ENCODE measurements at regions of chr3 and their contacts with region 1.

Region 1: GRCh38 chr3:12135029-12135657 is 23.6 kb downstream of the TIMP4 start:
- DNase-seq: no peak
- ATAC-seq: peak; percentile 95
- H3K4me3 ChIP-seq: no peak overlapping the region
- H3K27ac ChIP-seq: no peak overlapping the region
- H3K4me1 ChIP-seq: no peaks in the 10 kb centered on the region
- H3K27me3 ChIP-seq: no peaks in the 10 kb centered on the region
- CTCF ChIP-seq: peak; percentile 85 to 96 (median 96)
- EP300 ChIP-seq: no peak
- POLR2A ChIP-seq: no peak
- RAD21 ChIP-seq: peak; percentile 89

Region 2: GRCh38 chr3:12034440-12034839 is 100.7 kb before region 1 on chr3:
- CTCF ChIA-PET with region 1: no interaction called
- POLR2A ChIA-PET with region 1: no interaction called
- RAD21 ChIA-PET with region 1: no interaction called
- SMC1A ChIA-PET with region 1: no interaction called
- in situ Hi-C with region 1: no loop called
- intact Hi-C with region 1: no loop called
- DNase-seq: no peak
- ATAC-seq: no peak
- H3K4me3 ChIP-seq: no peak overlapping the region
- H3K27ac ChIP-seq: no peak overlapping the region
- H3K4me1 ChIP-seq: no peaks in the 10 kb centered on the region
- H3K27me3 ChIP-seq: no peaks in the 10 kb centered on the region
- CTCF ChIP-seq: no peak
- EP300 ChIP-seq: no peak
- POLR2A ChIP-seq: no peak
- RAD21 ChIP-seq: no peak

Region 3: GRCh38 chr3:12158387-12159226 is 23.5 kb after region 1 on chr3 and contains the start of gene TIMP4:
- CTCF ChIA-PET with region 1: interaction called, 24 read pairs
- POLR2A ChIA-PET with region 1: no interaction called
- RAD21 ChIA-PET with region 1: no interaction called
- SMC1A ChIA-PET with region 1: interaction called, 6 read pairs
- in situ Hi-C with region 1: no loop called
- intact Hi-C with region 1: no loop called
- DNase-seq: no peak
- ATAC-seq: no peak
- H3K4me3 ChIP-seq: no peak within 1 kb of the TSS
- H3K27ac ChIP-seq: no peak within 1 kb of the TSS
- H3K4me1 ChIP-seq: no peaks in the 10 kb centered on the region
- H3K27me3 ChIP-seq: peaks cover 0 to 1% of the 10 kb centered on the region in 2 experiments; a peak in 2 of 4 replicates
- CTCF ChIP-seq: no peak
- EP300 ChIP-seq: no peak
- POLR2A ChIP-seq: no peak
- RAD21 ChIP-seq: no peak
- polyA plus RNA-seq, gene TIMP4: not detected

Region 4: GRCh38 chr3:12175844-12176453 is 40.8 kb after region 1 on chr3:
- CTCF ChIA-PET with region 1: interaction called, 243 read pairs
- POLR2A ChIA-PET with region 1: interaction called, 3 read pairs
- RAD21 ChIA-PET with region 1: interaction called, 93 read pairs
- SMC1A ChIA-PET with region 1: interaction called, 96 read pairs
- in situ Hi-C with region 1: loop called (anchors 5 kb)
- intact Hi-C with region 1: loop called (anchors 1 kb)
- DNase-seq: no peak
- ATAC-seq: peak; percentile 100
- H3K4me3 ChIP-seq: no peak overlapping the region
- H3K27ac ChIP-seq: no peak overlapping the region
- H3K4me1 ChIP-seq: no peaks in the 10 kb centered on the region; the same call in 1 of the 2 replicates
- H3K27me3 ChIP-seq: no peaks in the 10 kb centered on the region
- CTCF ChIP-seq: peak; percentile 72 to 83 (median 82)
- EP300 ChIP-seq: no peak
- POLR2A ChIP-seq: no peak
- RAD21 ChIP-seq: peak; percentile 72

Region 5: DNA sequence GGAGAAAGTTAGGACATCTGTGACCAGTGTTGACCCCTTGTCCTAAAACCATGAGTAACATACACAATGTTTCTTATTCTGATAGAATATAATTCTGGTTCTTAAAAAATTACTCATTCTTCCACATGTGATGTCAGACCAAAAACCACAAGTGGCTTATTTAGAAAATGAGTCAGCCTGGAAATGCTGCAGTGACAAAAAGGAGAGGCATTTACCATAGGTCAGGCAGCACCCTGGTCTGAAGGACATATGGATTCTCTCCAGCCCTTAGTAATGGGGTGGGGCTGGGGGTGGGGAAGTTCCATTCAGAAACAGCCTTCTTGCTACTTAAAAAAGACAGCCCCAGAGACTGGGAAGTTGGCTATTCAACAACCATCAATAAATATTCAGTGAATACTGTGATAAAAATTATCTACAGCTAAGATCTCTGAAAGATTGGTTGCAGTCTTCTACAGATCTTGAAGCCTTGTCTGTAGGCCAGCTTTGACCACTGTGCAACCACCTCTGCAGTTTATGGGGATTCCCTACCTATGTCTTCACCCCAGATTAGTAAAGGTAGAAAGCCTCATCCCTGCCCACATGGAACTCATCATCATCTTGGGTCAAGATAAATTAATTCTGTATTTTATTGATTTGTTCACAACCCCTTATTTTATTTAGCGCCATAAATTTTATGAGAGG is 58.5 kb after region 1 on chr3:
- CTCF ChIA-PET with region 1: interaction called, 86 read pairs
- POLR2A ChIA-PET with region 1: no interaction called
- RAD21 ChIA-PET with region 1: interaction called, 16 read pairs
- SMC1A ChIA-PET with region 1: interaction called, 76 read pairs
- in situ Hi-C with region 1: no loop called
- intact Hi-C with region 1: loop called (anchors 2 kb)
- DNase-seq: peak; percentile 75
- ATAC-seq: peak; percentile 83
- H3K4me3 ChIP-seq: no peak overlapping the region
- H3K27ac ChIP-seq: peak overlapping the region; percentile 79
- H3K4me1 ChIP-seq: peaks cover 48% of the 10 kb centered on the region
- H3K27me3 ChIP-seq: no peaks in the 10 kb centered on the region
- CTCF ChIP-seq: no peak
- EP300 ChIP-seq: peak; percentile 85 to 91
- POLR2A ChIP-seq: no peak
- RAD21 ChIP-seq: no peak

Region 6: GRCh38 chr3:12349895-12350813 is 215.0 kb after region 1 on chr3:
- CTCF ChIA-PET with region 1: interaction called, 13 read pairs
- POLR2A ChIA-PET with region 1: no interaction called
- RAD21 ChIA-PET with region 1: interaction called, 6 read pairs
- SMC1A ChIA-PET with region 1: interaction called, 5 read pairs
- in situ Hi-C with region 1: no loop called
- intact Hi-C with region 1: loop called (anchors 5 kb)
- DNase-seq: no peak
- ATAC-seq: no peak
- H3K4me3 ChIP-seq: no peak overlapping the region
- H3K27ac ChIP-seq: no peak overlapping the region
- H3K4me1 ChIP-seq: no peaks in the 10 kb centered on the region
- H3K27me3 ChIP-seq: 0 out of 4 replicates have a peak, but pooled peaks cover 0 to 2% of the 10 kb centered on the region in 2 experiments
- CTCF ChIP-seq: no peak
- EP300 ChIP-seq: no peak
- POLR2A ChIP-seq: no peak
- RAD21 ChIP-seq: no peak

Region 7: GRCh38 chr3:12484198-12484974 is 349.2 kb after region 1 on chr3 and contains the start of gene TSEN2:
- CTCF ChIA-PET with region 1: interaction called, 255 read pairs
- POLR2A ChIA-PET with region 1: interaction called, 12 read pairs
- RAD21 ChIA-PET with region 1: interaction called, 139 read pairs
- SMC1A ChIA-PET with region 1: interaction called, 187 read pairs
- in situ Hi-C with region 1: loop called (anchors 5 kb)
- intact Hi-C with region 1: loop called (anchors 1 kb)
- DNase-seq: peak; percentile 88
- ATAC-seq: peak; percentile 96
- H3K4me3 ChIP-seq: peak within 1 kb of the TSS; percentile 95
- H3K27ac ChIP-seq: peak within 1 kb of the TSS; percentile 69
- H3K4me1 ChIP-seq: peaks cover 5% of the 10 kb centered on the region; the same call in 1 of the 2 replicates
- H3K27me3 ChIP-seq: no peaks in the 10 kb centered on the region
- CTCF ChIP-seq: peak in 1 of 3 experiments; percentile 65; a peak in 2 of 6 replicates
- EP300 ChIP-seq: no peak
- POLR2A ChIP-seq: peak; percentile 92
- RAD21 ChIP-seq: peak; percentile 38; the same call in 1 of the 2 replicates
- polyA plus RNA-seq, gene TSEN2: 24.5 TPM

Region 8: GRCh38 chr3:12719984-12720898 is 585.1 kb after region 1 on chr3:
- CTCF ChIA-PET with region 1: interaction called, 9 read pairs
- POLR2A ChIA-PET with region 1: no interaction called
- RAD21 ChIA-PET with region 1: interaction called, 4 read pairs
- SMC1A ChIA-PET with region 1: no interaction called
- in situ Hi-C with region 1: loop called (anchors 25 kb)
- intact Hi-C with region 1: loop called (anchors 5 kb)
- DNase-seq: no peak
- ATAC-seq: peak; percentile 96
- H3K4me3 ChIP-seq: no peak overlapping the region
- H3K27ac ChIP-seq: no peak overlapping the region
- H3K4me1 ChIP-seq: no peaks in the 10 kb centered on the region
- H3K27me3 ChIP-seq: no peaks in the 10 kb centered on the region
- CTCF ChIP-seq: peak; percentile 90 to 96 (median 95); a peak in 5 of 6 replicates
- EP300 ChIP-seq: no peak; a peak in 1 of 4 replicates
- POLR2A ChIP-seq: no peak
- RAD21 ChIP-seq: peak; percentile 84